Panc1 (cell line): ENCODE measurements at regions of chr6 and their contacts with region 1.

Region 1: DNA sequence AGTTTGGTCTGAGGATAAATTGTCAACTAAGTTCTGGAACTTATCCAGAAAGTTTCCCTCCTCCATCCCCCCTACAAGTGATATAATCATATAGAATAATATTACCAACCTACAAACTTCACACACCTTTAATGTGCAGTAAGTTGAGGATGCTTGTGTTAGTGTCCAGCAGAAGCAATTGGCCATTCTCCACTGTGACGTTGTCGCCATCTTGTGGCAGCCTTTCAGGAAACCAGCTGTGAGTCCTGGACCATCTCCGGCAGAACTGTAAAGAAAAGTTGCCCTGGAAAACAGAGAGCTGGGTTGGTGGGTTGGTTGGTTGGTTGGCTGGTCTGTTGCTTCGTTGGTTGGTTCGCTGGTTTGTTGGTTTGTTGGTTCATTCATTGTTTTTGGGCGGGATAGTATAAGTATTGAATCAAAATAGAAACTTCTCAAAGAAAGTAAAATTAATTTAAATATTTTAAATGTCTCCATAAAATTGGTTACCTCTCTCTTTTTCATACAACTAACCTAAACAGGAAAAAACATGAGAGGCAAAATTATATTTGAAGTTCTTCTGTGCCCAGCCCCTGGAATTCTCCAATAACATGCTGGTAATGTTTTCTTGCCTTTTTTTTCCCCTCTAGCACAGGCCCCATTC is 127.5 kb downstream of the PKHD1 start:
- DNase-seq: peak; percentile 58
- ATAC-seq: peak; percentile 86
- H3K4me3 ChIP-seq: no peak overlapping the region
- H3K27ac ChIP-seq: no peak overlapping the region
- H3K4me1 ChIP-seq: no peaks in the 10 kb centered on the region
- H3K27me3 ChIP-seq: no peaks in the 10 kb centered on the region
- CTCF ChIP-seq: peak; percentile 90

Region 2: DNA sequence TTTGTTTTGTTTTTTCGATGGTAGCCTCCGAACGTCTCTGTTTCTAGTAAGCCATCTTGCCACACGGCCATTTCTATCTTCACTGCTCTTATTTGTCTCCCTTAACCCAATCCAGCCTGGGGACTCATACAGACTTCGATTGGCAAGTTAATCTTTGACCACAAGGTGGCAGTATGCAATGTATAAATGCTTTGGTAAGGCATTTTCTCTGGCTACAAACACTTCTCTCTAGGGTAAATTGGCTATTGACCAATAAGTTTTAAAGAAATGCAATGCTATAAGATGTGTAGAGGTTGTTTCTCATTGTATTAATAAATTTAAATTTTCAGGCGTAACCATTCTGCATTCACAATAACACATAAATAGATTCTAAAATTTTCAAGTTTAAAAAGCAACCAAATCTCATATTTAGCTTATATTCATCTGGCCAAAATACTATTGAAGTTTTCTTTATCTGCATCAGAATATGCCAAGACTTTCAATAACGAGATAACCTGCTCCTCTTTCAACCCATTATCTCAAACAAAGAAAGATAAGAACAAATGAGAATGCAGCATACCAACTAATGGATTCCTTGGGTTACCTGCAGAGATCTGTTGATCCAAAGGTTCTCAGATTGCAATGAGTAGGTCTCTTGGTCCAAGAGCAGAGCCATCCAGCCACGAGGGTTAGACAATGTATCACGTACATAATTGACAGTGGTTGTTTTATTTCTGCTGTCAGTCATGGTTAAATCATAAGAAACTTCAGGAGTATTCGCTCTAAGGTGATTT is 104.4 kb before region 1 on chr6:
- CTCF ChIA-PET with region 1: no interaction called
- POLR2A ChIA-PET with region 1: no interaction called
- in situ Hi-C with region 1: no loop called
- intact Hi-C with region 1: loop called (anchors 2 kb)
- DNase-seq: peak; percentile 20
- ATAC-seq: peak; percentile 74
- H3K4me3 ChIP-seq: no peak overlapping the region
- H3K27ac ChIP-seq: no peak overlapping the region
- H3K4me1 ChIP-seq: no peaks in the 10 kb centered on the region
- H3K27me3 ChIP-seq: no peaks in the 10 kb centered on the region
- CTCF ChIP-seq: peak; percentile 77

Region 3: GRCh38 chr6:51983564-51983963 is 23.7 kb after region 1 on chr6:
- CTCF ChIA-PET with region 1: no interaction called
- POLR2A ChIA-PET with region 1: no interaction called
- in situ Hi-C with region 1: no loop called
- intact Hi-C with region 1: no loop called
- DNase-seq: no peak
- ATAC-seq: no peak
- H3K4me3 ChIP-seq: no peak overlapping the region
- H3K27ac ChIP-seq: no peak overlapping the region
- H3K4me1 ChIP-seq: no peaks in the 10 kb centered on the region
- H3K27me3 ChIP-seq: peaks cover 8% of the 10 kb centered on the region; the same call in 1 of the 2 replicates
- CTCF ChIP-seq: no peak